Cardiac septum (tissue), 1 donor: ENCODE measurements at regions of chr2 and their contacts with region 1.

Region 1: DNA sequence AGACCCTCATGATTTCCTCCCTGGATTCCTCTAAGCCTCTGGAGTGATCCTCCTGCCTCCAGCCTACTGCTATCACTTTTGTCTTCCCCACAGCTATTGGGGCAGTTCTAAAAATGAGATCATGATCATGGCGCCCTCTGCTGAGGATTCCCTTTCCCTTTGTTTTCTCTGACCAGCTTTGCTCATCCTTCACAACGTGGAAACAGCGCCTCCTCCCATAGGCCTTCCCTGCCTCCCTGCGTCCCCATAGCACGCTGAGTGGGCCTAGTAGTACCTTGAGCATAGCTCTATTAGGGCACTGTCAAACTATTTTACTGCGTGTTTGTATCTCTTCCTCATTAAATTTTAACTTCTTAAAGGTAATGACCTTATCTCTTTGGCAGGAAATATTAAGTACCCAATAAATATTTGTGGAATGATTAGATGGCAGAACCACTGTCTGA is 207.0 kb upstream of the FANCL start:
- DNase-seq: no peak

Region 2: GRCh38 chr2:57759822-57760300 is 688.2 kb before region 1 on chr2:
- intact Hi-C with region 1: loop called (anchors 10 kb)
- DNase-seq: peak; percentile 92

Region 3: DNA sequence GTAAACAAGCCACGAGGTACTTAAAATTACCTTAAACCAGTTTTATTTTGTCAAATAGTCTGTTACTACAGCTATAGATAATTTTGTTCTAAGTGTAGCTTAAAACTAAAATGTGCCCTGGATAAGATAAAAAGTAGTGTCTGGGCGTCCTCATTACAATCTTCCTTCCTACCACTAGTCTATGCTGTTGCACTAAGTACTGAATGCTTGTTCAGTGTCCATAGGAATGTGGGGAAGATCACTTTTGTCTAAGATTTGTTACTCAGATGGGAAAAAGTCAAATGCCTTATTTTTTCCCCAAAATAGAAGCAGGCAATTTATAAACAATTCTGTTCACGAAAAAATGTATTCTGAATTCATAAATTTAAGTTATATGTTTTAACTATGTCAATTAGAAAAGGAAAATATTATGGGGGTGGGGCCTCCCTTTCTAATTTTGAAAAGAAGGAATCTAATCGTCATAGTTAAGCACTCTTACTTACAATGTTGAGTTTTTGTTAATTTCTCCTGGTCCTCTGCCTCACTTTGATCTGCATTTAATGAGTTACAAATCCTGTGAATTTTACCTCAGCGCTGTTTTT is 541.8 kb before region 1 on chr2:
- intact Hi-C with region 1: loop called (anchors 5 kb)
- DNase-seq: no peak

Region 4: GRCh38 chr2:58484201-58484600 is 36.1 kb after region 1 on chr2:
- intact Hi-C with region 1: no loop called
- DNase-seq: no peak

Region 5: GRCh38 chr2:58734365-58734764 is 286.3 kb after region 1 on chr2:
- intact Hi-C with region 1: no loop called
- DNase-seq: no peak